Right cardiac atrium (tissue), 5 donors: ENCODE measurements at regions of chr12 and their contacts with region 1.

Region 1: DNA sequence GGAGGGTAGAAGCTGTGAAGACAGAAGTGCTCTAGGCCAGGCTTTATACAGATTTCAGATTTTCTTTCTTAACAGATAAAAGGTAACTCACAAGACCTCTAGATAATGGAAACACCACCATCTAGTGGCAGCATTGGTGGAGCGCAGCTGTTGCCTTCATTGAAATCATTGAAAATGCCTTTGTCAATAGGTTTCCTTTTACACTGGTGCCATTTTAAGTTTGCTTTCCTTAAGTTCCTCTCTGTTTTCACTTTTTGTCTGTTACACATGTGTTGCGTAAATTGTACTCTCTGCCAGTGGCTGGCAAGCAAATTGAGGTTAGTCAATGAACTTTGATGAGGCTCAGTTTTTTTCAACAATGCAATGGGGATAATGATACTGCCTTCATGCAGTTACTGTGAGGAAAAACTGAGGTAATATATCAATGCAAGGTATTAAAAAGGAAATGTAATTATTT is 31.1 kb downstream of the ALDH1L2 start:
- DNase-seq: peak; percentile 62 to 86 (median 71)
- ATAC-seq: peak; percentile 61 to 63
- H3K4me3 ChIP-seq: no peak overlapping the region
- H3K27ac ChIP-seq: no peak overlapping the region
- H3K4me1 ChIP-seq: no peaks in the 10 kb centered on the region
- H3K27me3 ChIP-seq: no peaks in the 10 kb centered on the region

Region 2: GRCh38 chr12:104376650-104377541 is 676.2 kb before region 1 on chr12:
- intact Hi-C with region 1: loop called in 2 of 4 experiments (anchors 5 kb)
- DNase-seq: no peak
- ATAC-seq: no peak
- H3K4me3 ChIP-seq: no peak overlapping the region
- H3K27ac ChIP-seq: no peak overlapping the region
- H3K4me1 ChIP-seq: peaks cover under 1% of the 10 kb centered on the region
- H3K27me3 ChIP-seq: no peaks in the 10 kb centered on the region

Region 3: GRCh38 chr12:104381731-104382480 is 671.2 kb before region 1 on chr12:
- intact Hi-C with region 1: loop called in 2 of 4 experiments (anchors 5 kb)
- DNase-seq: peak; percentile 71 to 89 (median 86)
- ATAC-seq: peak; percentile 81 to 88
- H3K4me3 ChIP-seq: no peak overlapping the region
- H3K27ac ChIP-seq: no peak overlapping the region
- H3K4me1 ChIP-seq: peaks cover 3% of the 10 kb centered on the region
- H3K27me3 ChIP-seq: no peaks in the 10 kb centered on the region

Region 4: GRCh38 chr12:104890476-104891096 is 162.6 kb before region 1 on chr12:
- intact Hi-C with region 1: loop called in 1 of 4 experiments (anchors 10 kb)
- DNase-seq: no peak
- ATAC-seq: no peak
- H3K4me3 ChIP-seq: no peak overlapping the region
- H3K27ac ChIP-seq: no peak overlapping the region
- H3K4me1 ChIP-seq: no peaks in the 10 kb centered on the region
- H3K27me3 ChIP-seq: no peaks in the 10 kb centered on the region

Region 5: GRCh38 chr12:104938371-104938770 is 114.8 kb before region 1 on chr12:
- intact Hi-C with region 1: no loop called
- DNase-seq: no peak
- ATAC-seq: no peak
- H3K4me3 ChIP-seq: no peak overlapping the region
- H3K27ac ChIP-seq: no peak overlapping the region
- H3K4me1 ChIP-seq: no peaks in the 10 kb centered on the region
- H3K27me3 ChIP-seq: no peaks in the 10 kb centered on the region

Region 6: DNA sequence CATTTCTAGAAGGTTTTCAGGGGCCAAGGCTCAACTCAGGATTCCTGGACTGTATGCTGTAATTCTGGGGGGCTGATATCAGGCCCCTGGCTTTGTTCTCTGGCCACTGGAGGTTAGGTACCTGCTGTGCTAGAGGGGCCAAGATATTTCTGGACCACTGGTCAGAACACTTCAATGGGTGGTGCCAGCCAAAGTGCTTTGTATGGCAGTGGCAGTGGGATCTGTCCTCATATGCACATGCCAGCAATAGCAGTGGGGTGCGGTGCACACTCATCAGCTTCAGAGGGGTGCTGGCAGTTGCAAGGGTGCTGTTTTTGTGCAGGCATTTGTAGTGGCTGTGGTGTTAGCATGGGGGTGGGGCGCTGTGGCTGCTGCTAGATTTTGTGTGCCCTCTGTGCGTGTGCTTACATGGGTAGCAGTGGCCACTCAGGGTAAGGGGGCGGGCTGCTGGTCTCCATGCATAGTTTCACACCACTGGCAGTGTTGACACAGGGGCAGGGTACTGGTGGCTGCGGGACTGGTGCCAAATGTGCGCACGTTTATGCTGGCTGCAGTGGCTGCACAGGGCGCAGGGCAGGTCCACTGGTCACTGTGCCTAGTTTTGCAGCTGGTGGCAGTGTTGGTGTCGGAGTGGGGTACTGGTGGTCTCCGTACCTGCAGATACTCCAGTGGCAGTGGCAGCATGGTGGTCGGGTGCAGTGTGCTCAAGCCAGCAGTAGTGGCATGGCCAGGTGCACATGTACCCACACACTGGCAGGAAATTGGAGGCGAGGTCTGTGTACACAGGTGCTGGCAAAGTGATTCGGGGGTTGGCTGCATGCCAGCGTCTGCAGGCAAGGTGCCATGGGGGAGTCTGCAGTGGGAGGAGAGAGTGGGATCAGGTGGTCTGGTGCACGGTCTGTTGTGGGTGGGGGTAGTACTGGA is 54.5 kb before region 1 on chr12:
- intact Hi-C with region 1: no loop called
- DNase-seq: peak in 1 of 3 donors; percentile 60
- ATAC-seq: peak in 1 of 2 donors; percentile 52
- H3K4me3 ChIP-seq: no peak overlapping the region
- H3K27ac ChIP-seq: no peak overlapping the region
- H3K4me1 ChIP-seq: no peaks in the 10 kb centered on the region
- H3K27me3 ChIP-seq: no peaks in the 10 kb centered on the region